T-cell (primary cell): ENCODE measurements at regions of chr14 and their contacts with region 1.

Region 1: DNA sequence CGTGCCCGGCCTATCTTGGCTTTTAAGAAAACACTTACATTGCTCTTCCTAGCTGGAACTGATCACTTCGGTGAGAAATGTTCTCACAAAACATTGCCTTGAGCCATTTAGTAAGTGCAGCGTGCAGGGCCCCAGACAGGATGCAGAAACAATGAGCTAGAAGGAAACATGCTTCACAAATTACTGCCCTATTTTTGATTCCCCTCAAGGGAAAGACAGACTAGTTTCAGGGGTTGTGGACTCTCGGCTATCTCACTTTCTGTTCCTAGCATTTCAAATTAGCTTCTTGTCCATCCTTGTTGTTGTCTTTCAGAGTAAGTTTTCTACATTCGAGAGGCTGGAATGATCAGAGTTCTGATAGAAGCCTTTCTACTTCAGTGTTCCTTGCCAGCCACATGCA is 21.6 kb downstream of the TGFB3 start:
- DNase-seq: no peak
- ATAC-seq: no peak
- H3K4me3 ChIP-seq: no peak overlapping the region
- H3K4me3 Mint-ChIP-seq: no peak overlapping the region
- H3K27ac ChIP-seq: no peak overlapping the region
- H3K27ac Mint-ChIP-seq: no peak overlapping the region
- H3K4me1 ChIP-seq: no peaks in the 10 kb centered on the region
- H3K4me1 Mint-ChIP-seq: peaks cover 0 to 5% (median 0%) of the 10 kb centered on the region in 3 donors
- H3K27me3 ChIP-seq: no peaks in the 10 kb centered on the region
- H3K27me3 Mint-ChIP-seq: no peaks in the 10 kb centered on the region

Region 2: GRCh38 chr14:75597149-75597548 is 363.1 kb before region 1 on chr14:
- CTCF ChIA-PET with region 1: no interaction called
- POLR2A ChIA-PET with region 1: no interaction called
- DNase-seq: no peak
- ATAC-seq: no peak
- H3K4me3 ChIP-seq: no peak overlapping the region
- H3K4me3 Mint-ChIP-seq: no peak overlapping the region
- H3K27ac ChIP-seq: no peak overlapping the region
- H3K27ac Mint-ChIP-seq: no peak overlapping the region
- H3K4me1 ChIP-seq: no peaks in the 10 kb centered on the region
- H3K4me1 Mint-ChIP-seq: no peaks in the 10 kb centered on the region
- H3K27me3 ChIP-seq: no peaks in the 10 kb centered on the region
- H3K27me3 Mint-ChIP-seq: no peaks in the 10 kb centered on the region

Region 3: GRCh38 chr14:75915061-75915460 is 45.2 kb before region 1 on chr14:
- CTCF ChIA-PET with region 1: no interaction called
- POLR2A ChIA-PET with region 1: interaction called in 1 of 2 experiments, 26 read pairs
- DNase-seq: no peak
- ATAC-seq: no peak
- H3K4me3 ChIP-seq: no peak overlapping the region
- H3K4me3 Mint-ChIP-seq: no peak overlapping the region
- H3K27ac ChIP-seq: no peak overlapping the region
- H3K27ac Mint-ChIP-seq: no peak overlapping the region
- H3K4me1 ChIP-seq: no peaks in the 10 kb centered on the region
- H3K4me1 Mint-ChIP-seq: no peaks in the 10 kb centered on the region
- H3K27me3 ChIP-seq: no peaks in the 10 kb centered on the region
- H3K27me3 Mint-ChIP-seq: no peaks in the 10 kb centered on the region

Region 4: GRCh38 chr14:75941030-75941429 is 19.2 kb before region 1 on chr14:
- CTCF ChIA-PET with region 1: no interaction called
- POLR2A ChIA-PET with region 1: no interaction called
- DNase-seq: no peak
- ATAC-seq: no peak
- H3K4me3 ChIP-seq: no peak overlapping the region
- H3K4me3 Mint-ChIP-seq: no peak overlapping the region
- H3K27ac ChIP-seq: no peak overlapping the region
- H3K27ac Mint-ChIP-seq: no peak overlapping the region
- H3K4me1 ChIP-seq: no peaks in the 10 kb centered on the region
- H3K4me1 Mint-ChIP-seq: no peaks in the 10 kb centered on the region
- H3K27me3 ChIP-seq: no peaks in the 10 kb centered on the region
- H3K27me3 Mint-ChIP-seq: no peaks in the 10 kb centered on the region

Region 5: GRCh38 chr14:76550534-76550933 is 590.3 kb after region 1 on chr14:
- CTCF ChIA-PET with region 1: no interaction called
- POLR2A ChIA-PET with region 1: no interaction called
- DNase-seq: no peak
- ATAC-seq: no peak
- H3K4me3 ChIP-seq: no peak overlapping the region
- H3K4me3 Mint-ChIP-seq: no peak overlapping the region
- H3K27ac ChIP-seq: no peak overlapping the region
- H3K27ac Mint-ChIP-seq: no peak overlapping the region
- H3K4me1 ChIP-seq: no peaks in the 10 kb centered on the region
- H3K4me1 Mint-ChIP-seq: no peaks in the 10 kb centered on the region
- H3K27me3 ChIP-seq: peaks cover 0 to 18% of the 10 kb centered on the region in 2 experiments
- H3K27me3 Mint-ChIP-seq: peaks cover 9 to 16% of the 10 kb centered on the region in 2 donors